RWPE1 (cell line): ENCODE measurements at regions of chr9 and their contacts with region 1.

Region 1: DNA sequence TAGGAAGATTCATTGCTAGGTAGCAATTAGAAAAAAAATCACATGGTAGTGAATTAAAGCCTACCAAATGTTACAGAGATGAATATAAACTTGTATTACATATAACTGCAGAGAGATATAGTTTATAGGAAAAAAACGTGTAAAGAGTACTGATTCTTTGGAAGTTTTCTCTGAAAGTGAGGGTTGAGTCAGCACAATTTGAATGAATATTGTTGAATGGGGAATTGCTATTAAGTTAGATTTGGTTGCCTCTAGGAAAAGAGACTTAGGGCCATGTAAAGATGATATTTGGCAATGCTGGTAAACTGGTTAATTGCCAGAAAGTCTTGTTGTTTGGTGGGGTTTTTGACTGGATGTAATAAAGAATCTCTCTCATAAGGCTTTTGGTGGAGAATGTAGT is 37.2 kb upstream of the TAL2 start:
- DNase-seq: no peak
- H3K27ac ChIP-seq: no peak overlapping the region
- CTCF ChIP-seq: no peak

Region 2: DNA sequence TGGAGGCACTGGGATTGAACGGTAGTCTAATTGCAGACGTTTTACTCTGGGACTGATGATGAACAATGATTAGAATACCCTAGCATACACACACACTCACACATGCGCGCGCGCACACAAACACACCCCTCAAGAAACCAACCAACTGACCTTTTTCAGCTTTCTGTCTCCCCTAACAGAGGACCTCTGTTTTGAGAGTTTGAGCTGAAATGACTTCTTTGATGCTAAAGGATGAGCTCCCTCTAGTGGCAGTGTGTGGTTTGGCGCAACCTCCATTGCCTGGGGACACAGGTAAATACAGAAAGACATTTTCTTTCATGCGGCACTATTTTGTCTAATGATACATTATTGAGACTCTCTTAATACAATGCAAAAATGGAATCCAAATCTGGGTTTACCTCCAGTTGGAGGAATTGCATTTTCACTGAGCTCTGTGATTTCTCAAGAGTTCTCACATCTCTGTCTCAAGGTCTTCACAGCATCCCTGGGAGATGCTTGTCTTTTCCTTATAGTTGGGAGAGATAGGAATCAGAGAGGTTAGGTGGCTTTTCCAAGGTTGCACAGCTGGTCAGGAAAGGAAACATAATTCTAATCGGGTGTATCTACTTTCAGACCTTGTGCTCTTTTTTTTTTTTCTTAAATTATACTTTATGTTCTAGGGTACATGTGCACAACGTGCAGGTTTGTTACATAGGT is 256.7 kb after region 1 on chr9:
- CTCF ChIA-PET with region 1: interaction called, 12 read pairs
- POLR2A ChIA-PET with region 1: no interaction called
- DNase-seq: peak; percentile 75
- H3K27ac ChIP-seq: no peak overlapping the region
- CTCF ChIP-seq: peak; percentile 98